Lower leg skin (tissue), 4 donors: ENCODE measurements at regions of chr14 and their contacts with region 1.

Region 1: GRCh38 chr14:69107407-69108003 is 45.4 kb downstream of the DCAF5 start:
- DNase-seq: peak in 1 of 2 donors; percentile 45
- H3K4me3 ChIP-seq: no peak overlapping the region
- CTCF ChIP-seq: no peak
- POLR2A ChIP-seq: no peak

Region 2: GRCh38 chr14:68862954-68863594 is 244.4 kb before region 1 on chr14:
- intact Hi-C with region 1: loop called (anchors 5 kb)
- DNase-seq: peak; percentile 73 to 94
- H3K4me3 ChIP-seq: no peak overlapping the region
- CTCF ChIP-seq: peak in 1 of 3 donors; percentile 47
- POLR2A ChIP-seq: no peak